PC-3 (cell line): ENCODE measurements at regions of chr6 and their contacts with region 1.

Region 1: GRCh38 chr6:142207265-142207877 is 60.3 kb downstream of the VTA1 start:
- DNase-seq: peak; percentile 69
- ATAC-seq: peak; percentile 79
- H3K4me3 ChIP-seq: no peak overlapping the region
- H3K27ac ChIP-seq: no peak overlapping the region
- H3K4me1 ChIP-seq: no peaks in the 10 kb centered on the region
- H3K27me3 ChIP-seq: no peaks in the 10 kb centered on the region
- CTCF ChIP-seq: peak; percentile 80

Region 2: DNA sequence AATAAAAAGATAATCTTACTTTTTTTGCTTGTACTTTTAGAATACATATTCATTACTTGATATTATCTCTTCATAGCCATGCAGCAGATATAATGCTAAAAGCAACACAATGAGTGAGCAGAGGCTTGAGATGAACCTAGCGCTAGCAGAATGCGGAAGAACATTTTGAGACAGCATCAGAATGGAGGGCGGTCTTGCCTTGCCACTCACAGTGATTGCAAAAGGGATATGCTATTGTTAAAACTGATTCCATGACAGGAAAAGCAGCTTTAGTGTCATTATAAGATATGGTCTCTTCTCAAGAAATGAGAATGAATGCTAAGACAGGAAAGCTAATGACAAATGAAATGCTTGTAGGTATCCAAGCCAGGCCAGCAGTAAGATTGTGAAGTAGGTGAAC is 274.7 kb before region 1 on chr6:
- CTCF ChIA-PET with region 1: no interaction called
- POLR2A ChIA-PET with region 1: no interaction called
- intact Hi-C with region 1: no loop called
- DNase-seq: no peak
- ATAC-seq: no peak
- H3K4me3 ChIP-seq: no peak overlapping the region
- H3K27ac ChIP-seq: no peak overlapping the region
- H3K4me1 ChIP-seq: no peaks in the 10 kb centered on the region
- H3K27me3 ChIP-seq: no peaks in the 10 kb centered on the region
- CTCF ChIP-seq: no peak

Region 3: GRCh38 chr6:142121342-142121741 is 86.0 kb before region 1 on chr6:
- CTCF ChIA-PET with region 1: no interaction called
- POLR2A ChIA-PET with region 1: no interaction called
- intact Hi-C with region 1: no loop called
- DNase-seq: no peak
- ATAC-seq: no peak
- H3K4me3 ChIP-seq: no peak overlapping the region
- H3K27ac ChIP-seq: no peak overlapping the region
- H3K4me1 ChIP-seq: no peaks in the 10 kb centered on the region
- H3K27me3 ChIP-seq: no peaks in the 10 kb centered on the region
- CTCF ChIP-seq: no peak

Region 4: GRCh38 chr6:142146828-142147662 is 60.3 kb before region 1 on chr6 and contains the starts of genes NMBR and VTA1:
- CTCF ChIA-PET with region 1: no interaction called
- POLR2A ChIA-PET with region 1: interaction called, 4 read pairs
- intact Hi-C with region 1: loop called (anchors 2 kb)
- DNase-seq: peak; percentile 98
- ATAC-seq: peak; percentile 99
- H3K4me3 ChIP-seq: peak within 1 kb of the TSS; percentile 93
- H3K27ac ChIP-seq: peak within 1 kb of the TSS; percentile 7; the same call in 1 of the 2 replicates
- H3K4me1 ChIP-seq: peaks cover 14% of the 10 kb centered on the region
- H3K27me3 ChIP-seq: no peaks in the 10 kb centered on the region
- CTCF ChIP-seq: peak; percentile 88
- total RNA-seq, gene NMBR: not detected in 2 replicates
- total RNA-seq, gene VTA1: 35.9 and 38.6 TPM in 2 replicates

Region 5: GRCh38 chr6:142155895-142156757 is 51.2 kb before region 1 on chr6:
- CTCF ChIA-PET with region 1: no interaction called
- POLR2A ChIA-PET with region 1: no interaction called
- intact Hi-C with region 1: loop called (anchors 1 kb)
- DNase-seq: peak; percentile 64
- ATAC-seq: peak; percentile 46
- H3K4me3 ChIP-seq: no peak overlapping the region
- H3K27ac ChIP-seq: no peak overlapping the region
- H3K4me1 ChIP-seq: peaks cover 26% of the 10 kb centered on the region
- H3K27me3 ChIP-seq: no peaks in the 10 kb centered on the region
- CTCF ChIP-seq: peak; percentile 62

Region 6: DNA sequence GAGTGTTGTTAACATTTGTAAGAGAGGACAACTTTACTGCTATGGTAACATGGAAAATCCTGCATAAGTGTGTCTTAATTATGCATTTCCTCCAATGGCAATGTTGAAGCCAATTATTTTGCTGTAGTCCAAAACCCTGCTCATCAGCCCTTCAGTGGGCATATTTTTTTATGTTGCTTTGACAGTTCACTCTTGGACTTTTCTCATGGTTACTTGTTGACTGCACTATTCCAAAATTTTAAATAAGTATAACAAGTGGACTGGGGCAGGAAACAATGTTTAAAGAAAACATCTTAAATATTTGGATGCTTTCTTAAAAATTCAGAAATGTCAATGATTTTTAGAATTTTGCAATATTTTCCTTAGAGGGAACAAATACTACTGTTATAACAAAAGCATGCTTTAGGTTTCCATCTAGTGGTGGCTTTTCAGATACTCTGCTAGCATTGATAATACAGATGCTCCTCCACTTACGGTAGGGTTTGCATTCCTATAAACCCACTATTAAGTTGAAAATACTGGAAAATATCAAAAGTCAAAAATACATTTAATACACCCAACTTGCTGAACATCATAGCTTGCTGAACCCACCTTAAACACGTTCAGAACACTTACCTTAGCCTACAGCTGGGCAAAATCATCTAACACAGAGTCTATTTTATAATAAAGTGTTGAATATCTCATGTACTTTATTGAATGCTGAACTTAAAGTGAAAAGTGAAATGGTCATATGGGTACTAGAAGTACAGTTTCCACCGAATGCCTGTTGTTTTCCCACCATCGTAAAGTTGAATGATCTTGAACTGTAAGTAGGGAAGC is 180.8 kb after region 1 on chr6:
- CTCF ChIA-PET with region 1: no interaction called
- POLR2A ChIA-PET with region 1: no interaction called
- intact Hi-C with region 1: loop called (anchors 5 kb)
- DNase-seq: peak; percentile 72
- ATAC-seq: peak; percentile 67
- H3K4me3 ChIP-seq: no peak overlapping the region
- H3K27ac ChIP-seq: peak overlapping the region; percentile 92
- H3K4me1 ChIP-seq: peaks cover 37% of the 10 kb centered on the region
- H3K27me3 ChIP-seq: no peaks in the 10 kb centered on the region
- CTCF ChIP-seq: peak; percentile 77

Region 7: DNA sequence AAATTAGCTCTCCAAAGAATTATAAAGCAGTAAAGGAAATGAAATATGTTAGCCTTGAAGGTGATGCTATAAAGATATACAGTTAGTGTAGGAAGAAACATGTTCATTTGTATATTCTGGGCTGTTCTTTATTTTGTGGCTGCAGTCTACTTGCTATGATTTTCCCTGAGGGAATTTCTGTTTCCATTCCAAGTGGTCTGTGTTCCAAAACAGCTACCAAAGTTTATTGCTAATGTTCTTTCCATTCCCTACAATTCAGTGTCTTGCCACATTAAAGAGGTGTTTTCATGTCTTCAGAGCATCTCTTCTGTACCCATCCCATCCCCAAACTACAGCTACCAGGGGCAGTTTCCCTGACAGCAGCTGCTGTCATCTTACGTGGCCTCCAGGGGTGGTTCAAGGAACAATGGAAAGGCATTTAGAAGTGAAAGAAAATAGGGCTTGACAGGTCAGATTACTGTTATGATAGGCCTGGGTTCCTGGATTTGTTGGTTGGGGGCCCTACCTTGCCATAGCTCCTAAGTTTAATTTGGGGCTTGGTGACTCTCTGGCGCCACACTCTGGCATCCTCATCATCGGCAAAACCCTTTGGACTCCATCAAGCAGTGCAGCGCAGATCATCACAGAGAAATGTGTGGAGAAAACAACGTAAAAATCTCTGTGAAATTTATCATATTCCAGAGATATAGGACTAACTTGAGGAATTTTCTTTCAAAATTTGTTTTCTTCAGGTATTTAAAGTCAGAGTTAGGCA is 819.5 kb after region 1 on chr6:
- CTCF ChIA-PET with region 1: no interaction called
- POLR2A ChIA-PET with region 1: no interaction called
- intact Hi-C with region 1: no loop called
- DNase-seq: peak; percentile 41
- ATAC-seq: no peak
- H3K4me3 ChIP-seq: no peak overlapping the region
- H3K27ac ChIP-seq: no peak overlapping the region
- H3K4me1 ChIP-seq: peaks cover 17% of the 10 kb centered on the region
- H3K27me3 ChIP-seq: no peaks in the 10 kb centered on the region
- CTCF ChIP-seq: peak; percentile 68